MCF 10A (cell line): ENCODE measurements at regions of chr15 and their contacts with region 1.

Region 1: GRCh38 chr15:50675536-50676144 is 11.0 kb downstream of the TRPM7 start:
- DNase-seq: peak; percentile 45
- H3K4me3 Mint-ChIP-seq: no peak overlapping the region
- H3K27ac Mint-ChIP-seq: peak overlapping the region; percentile 68
- H3K4me1 Mint-ChIP-seq: peaks cover 12% of the 10 kb centered on the region
- H3K27me3 Mint-ChIP-seq: no peaks in the 10 kb centered on the region
- CTCF ChIP-seq: peak; percentile 69

Region 2: DNA sequence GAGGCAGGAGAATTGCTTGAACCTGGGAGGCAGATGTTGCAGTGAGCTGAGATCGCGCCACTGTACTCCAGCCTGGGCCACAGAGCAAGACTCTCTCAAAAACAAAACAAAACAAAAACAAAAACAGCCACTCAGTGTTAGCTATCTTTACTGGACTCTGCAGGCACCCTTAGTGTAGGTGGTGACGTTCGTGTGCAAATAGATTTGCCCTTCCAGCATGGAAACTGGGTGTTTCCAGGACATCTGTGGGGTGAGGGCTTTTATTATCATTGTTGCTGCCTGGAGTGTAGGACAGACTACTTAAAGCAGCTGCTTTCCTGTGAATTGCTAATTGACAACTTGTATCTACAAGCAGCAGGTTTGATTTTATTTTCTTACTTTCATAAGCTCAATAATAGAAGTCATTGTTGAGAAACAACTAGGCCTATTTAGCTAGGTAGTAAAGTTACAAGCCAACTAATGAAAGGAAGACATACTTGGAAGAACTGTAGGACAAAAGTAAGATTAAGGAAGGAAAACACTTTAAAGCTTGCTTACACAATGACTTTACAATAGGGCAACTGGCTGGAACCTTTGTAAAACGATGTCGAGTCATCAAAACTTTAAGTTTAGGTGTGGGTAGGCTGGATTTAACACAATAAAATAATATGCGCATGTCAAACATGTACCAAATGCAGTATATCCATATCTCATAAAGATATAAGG is 115.3 kb after region 1 on chr15:
- CTCF ChIA-PET with region 1: no interaction called
- POLR2A ChIA-PET with region 1: no interaction called
- intact Hi-C with region 1: no loop called
- DNase-seq: no peak
- H3K4me3 Mint-ChIP-seq: no peak overlapping the region
- H3K27ac Mint-ChIP-seq: no peak overlapping the region
- H3K4me1 Mint-ChIP-seq: no peaks in the 10 kb centered on the region
- H3K27me3 Mint-ChIP-seq: no peaks in the 10 kb centered on the region
- CTCF ChIP-seq: no peak

Region 3: GRCh38 chr15:50876989-50877360 is 201.3 kb after region 1 on chr15:
- CTCF ChIA-PET with region 1: interaction called, 24 read pairs
- POLR2A ChIA-PET with region 1: interaction called, 9 read pairs
- intact Hi-C with region 1: loop called (anchors 1 kb)
- DNase-seq: peak; percentile 90
- H3K4me3 Mint-ChIP-seq: peak overlapping the region; percentile 49
- H3K27ac Mint-ChIP-seq: peak overlapping the region; percentile 52
- H3K4me1 Mint-ChIP-seq: peaks cover 26% of the 10 kb centered on the region
- H3K27me3 Mint-ChIP-seq: peaks cover 13% of the 10 kb centered on the region
- CTCF ChIP-seq: peak; percentile 95

Region 4: DNA sequence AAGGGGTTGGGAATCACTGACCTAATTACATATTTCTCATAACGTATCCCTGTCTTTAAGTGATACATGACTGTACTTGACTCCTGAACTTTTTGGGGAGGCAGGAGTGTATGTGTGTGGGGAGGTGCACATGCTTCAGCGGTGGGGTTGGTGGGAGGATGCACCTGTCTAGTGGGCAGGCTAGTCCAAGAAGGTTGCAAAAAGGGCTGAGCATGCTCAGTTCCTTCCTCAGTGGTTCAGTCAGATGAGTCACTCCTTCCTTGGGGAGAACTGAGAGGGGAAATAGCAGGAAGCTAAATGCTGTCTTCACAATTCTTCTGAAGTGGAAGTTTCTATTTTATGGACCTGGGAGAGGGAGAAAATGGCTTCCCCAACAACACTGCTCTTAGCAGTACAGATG is 208.3 kb after region 1 on chr15:
- CTCF ChIA-PET with region 1: interaction called, 9 read pairs
- POLR2A ChIA-PET with region 1: interaction called, 11 read pairs
- intact Hi-C with region 1: loop called (anchors 2 kb)
- DNase-seq: peak; percentile 89
- H3K4me3 Mint-ChIP-seq: peak overlapping the region; percentile 74
- H3K27ac Mint-ChIP-seq: peak overlapping the region; percentile 96
- H3K4me1 Mint-ChIP-seq: peaks cover 57% of the 10 kb centered on the region
- H3K27me3 Mint-ChIP-seq: no peaks in the 10 kb centered on the region
- CTCF ChIP-seq: no peak

Region 5: GRCh38 chr15:50908210-50909009 is 232.8 kb after region 1 on chr15 and contains the start of gene AP4E1:
- CTCF ChIA-PET with region 1: interaction called, 6 read pairs
- POLR2A ChIA-PET with region 1: interaction called, 5 read pairs
- intact Hi-C with region 1: loop called (anchors 1 kb)
- DNase-seq: peak; percentile 91
- H3K4me3 Mint-ChIP-seq: peak within 1 kb of the TSS; percentile 81
- H3K27ac Mint-ChIP-seq: peak within 1 kb of the TSS; percentile 81
- H3K4me1 Mint-ChIP-seq: no peaks in the 10 kb centered on the region
- H3K27me3 Mint-ChIP-seq: no peaks in the 10 kb centered on the region
- CTCF ChIP-seq: peak; percentile 97
- total RNA-seq, gene AP4E1: 25.5 and 28.2 TPM in 2 replicates